Caco-2 (cell line): ENCODE measurements at regions of chr11 and their contacts with region 1.

Region 1: GRCh38 chr11:36034551-36035331 is 90.9 kb downstream of the LDLRAD3 start:
- DNase-seq: peak; percentile 54 to 58
- H3K4me3 ChIP-seq: no peak overlapping the region
- H3K4me3 Mint-ChIP-seq: peak overlapping the region; percentile 60
- H3K27ac Mint-ChIP-seq: peak overlapping the region; percentile 78
- H3K4me1 ChIP-seq: peaks cover 51% of the 10 kb centered on the region
- H3K4me1 Mint-ChIP-seq: peaks cover 45% of the 10 kb centered on the region
- H3K27me3 ChIP-seq: no peaks in the 10 kb centered on the region
- H3K27me3 Mint-ChIP-seq: no peaks in the 10 kb centered on the region
- CTCF ChIP-seq: no peak

Region 2: DNA sequence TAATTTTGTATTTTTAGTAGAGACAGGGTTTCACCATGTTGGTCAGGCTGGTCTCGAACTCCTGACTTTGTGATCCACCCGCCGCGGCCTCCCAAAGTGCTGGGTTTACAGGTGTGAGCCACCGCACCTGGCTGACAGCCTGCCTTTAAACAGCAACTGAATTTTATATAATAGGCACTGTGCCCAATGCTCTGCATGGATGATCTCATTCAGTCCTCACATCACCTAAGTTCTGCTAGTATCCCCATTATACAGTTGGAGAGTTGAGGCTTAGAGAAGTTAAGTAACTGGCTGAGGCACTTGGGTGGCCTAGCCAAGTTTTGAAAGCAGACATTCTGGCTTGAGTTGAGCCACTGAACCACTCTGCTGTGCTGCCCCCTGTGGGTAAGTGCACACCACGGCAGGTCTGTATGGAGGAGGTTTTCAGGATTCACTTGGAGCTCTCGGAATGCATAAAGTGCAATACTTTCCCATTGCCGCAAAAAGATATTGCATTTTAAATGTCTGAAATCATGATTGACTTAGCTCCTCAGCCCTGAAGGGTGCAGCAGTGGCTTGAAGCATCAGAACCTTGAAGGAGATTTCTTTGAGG is 21.5 kb after region 1 on chr11:
- CTCF ChIA-PET with region 1: interaction called, 10 read pairs
- POLR2A ChIA-PET with region 1: no interaction called
- intact Hi-C with region 1: no loop called
- DNase-seq: peak in 1 of 2 experiments; percentile 38
- H3K4me3 ChIP-seq: no peak overlapping the region
- H3K4me3 Mint-ChIP-seq: no peak overlapping the region
- H3K27ac Mint-ChIP-seq: no peak overlapping the region
- H3K4me1 ChIP-seq: no peaks in the 10 kb centered on the region
- H3K4me1 Mint-ChIP-seq: no peaks in the 10 kb centered on the region
- H3K27me3 ChIP-seq: no peaks in the 10 kb centered on the region
- H3K27me3 Mint-ChIP-seq: no peaks in the 10 kb centered on the region
- CTCF ChIP-seq: peak; percentile 26 to 70

Region 3: GRCh38 chr11:36149538-36150242 is 114.9 kb after region 1 on chr11:
- CTCF ChIA-PET with region 1: no interaction called
- POLR2A ChIA-PET with region 1: no interaction called
- intact Hi-C with region 1: loop called (anchors 2 kb)
- DNase-seq: peak; percentile 79 to 87
- H3K4me3 ChIP-seq: no peak overlapping the region
- H3K4me3 Mint-ChIP-seq: peak overlapping the region; percentile 2
- H3K27ac Mint-ChIP-seq: peak overlapping the region; percentile 89
- H3K4me1 ChIP-seq: peaks cover 30% of the 10 kb centered on the region
- H3K4me1 Mint-ChIP-seq: peaks cover 15% of the 10 kb centered on the region
- H3K27me3 ChIP-seq: no peaks in the 10 kb centered on the region
- H3K27me3 Mint-ChIP-seq: no peaks in the 10 kb centered on the region
- CTCF ChIP-seq: peak; percentile 36 to 58